ENCODE measurements at regions of chr3 and their contacts with region 1.

Region 1: DNA sequence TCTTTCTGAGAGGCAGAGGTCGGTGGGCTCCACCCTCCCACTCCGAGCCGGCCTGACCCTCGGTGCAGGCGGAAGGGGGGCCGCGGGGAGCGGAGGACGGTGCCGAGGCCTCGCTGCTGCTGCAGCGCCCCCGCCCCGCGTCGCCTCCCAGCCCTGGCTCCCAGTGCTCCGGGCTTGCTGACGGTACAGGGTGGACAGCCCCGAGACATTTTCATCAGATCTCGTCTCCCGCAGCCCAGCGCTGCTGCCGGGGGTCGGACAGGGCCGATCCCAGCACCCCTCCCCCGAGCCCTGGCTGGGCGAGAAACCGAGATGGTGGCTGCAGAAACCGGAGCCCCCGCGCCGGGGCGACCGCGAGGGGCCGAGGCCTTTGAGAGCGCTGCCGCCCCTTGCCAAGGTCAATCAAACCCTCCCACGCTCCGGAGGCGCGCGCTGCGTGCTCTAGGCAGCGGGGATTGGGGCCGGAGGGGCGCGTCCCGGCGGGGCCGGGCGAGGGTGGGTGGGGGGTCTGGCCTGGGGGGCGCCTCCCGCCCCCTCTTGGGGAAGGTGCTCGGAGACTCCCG is 42.5 kb downstream of the EPHB3 start:
- DNase-seq: no peak
- H3K4me3 ChIP-seq: peak overlapping the region; percentile 24 to 67 (median 46)
- H3K27ac ChIP-seq: no peak overlapping the region
- H3K4me1 ChIP-seq: peaks cover 6 to 23% (median 15%) of the 10 kb centered on the region in 4 experiments
- H3K27me3 ChIP-seq: peaks cover 41 to 83% (median 78%) of the 10 kb centered on the region in 4 experiments
- CTCF ChIP-seq: peak in 2 of 3 experiments; percentile 2 to 9; a peak in 2 of 4 replicates
- EP300 ChIP-seq: no peak
- POLR2A ChIP-seq: no peak
- RAD21 ChIP-seq: no peak; a peak in 1 of 4 replicates

Region 2: DNA sequence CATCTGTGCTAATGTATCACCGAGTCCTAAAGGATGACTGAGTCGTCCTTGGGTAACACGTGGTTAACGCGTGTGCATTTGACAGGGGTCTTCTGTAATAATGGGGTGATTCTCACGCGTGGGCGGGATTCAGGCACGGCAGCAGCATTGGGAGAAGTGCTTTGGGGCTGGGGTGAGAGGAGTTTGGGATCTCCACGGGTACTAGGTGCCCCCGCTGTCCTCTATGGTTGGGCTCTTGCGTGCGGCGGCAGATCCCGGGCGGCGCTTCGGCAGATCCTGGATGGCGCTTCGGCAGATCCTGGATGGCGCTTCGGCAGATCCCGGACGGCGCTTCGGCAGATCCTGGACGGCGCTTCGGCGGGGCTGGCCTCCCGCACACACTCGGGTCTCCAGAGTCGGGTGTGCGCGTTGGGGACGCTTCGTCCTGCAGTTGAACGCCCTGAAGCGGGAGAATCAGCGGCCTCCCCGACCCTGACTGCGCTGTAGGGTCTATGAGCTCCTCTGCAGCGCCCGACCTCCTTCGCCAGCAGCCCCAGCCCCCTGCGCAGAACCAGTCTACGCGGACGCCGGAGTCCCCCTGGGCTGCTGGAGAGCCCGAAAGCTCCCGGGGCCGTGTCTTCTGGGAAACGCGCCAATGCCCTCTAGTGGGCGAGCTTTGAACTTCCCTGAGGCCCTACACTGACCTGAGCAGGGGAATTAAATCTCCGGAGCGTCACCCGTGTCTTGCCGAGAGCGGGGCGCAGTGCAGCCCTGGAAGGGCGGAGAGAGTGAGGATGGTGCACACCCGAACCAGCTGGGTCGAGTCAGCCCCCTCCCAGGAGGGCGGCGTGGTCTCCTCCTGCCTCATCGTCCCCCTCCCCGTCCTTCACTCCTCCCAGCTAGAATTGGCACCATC is 90.6 kb before region 1 on chr3:
- CTCF ChIA-PET with region 1: no interaction called
- POLR2A ChIA-PET with region 1: no interaction called
- DNase-seq: peak; percentile 75 to 95
- H3K4me3 ChIP-seq: peak overlapping the region; percentile 13 to 61 (median 50)
- H3K27ac ChIP-seq: no peak overlapping the region
- H3K4me1 ChIP-seq: peaks cover 0 to 5% (median 1%) of the 10 kb centered on the region in 4 experiments; a peak in 2 of 7 replicates
- H3K27me3 ChIP-seq: peaks cover 10 to 27% (median 17%) of the 10 kb centered on the region in 4 experiments
- CTCF ChIP-seq: peak; percentile 75 to 86 (median 79)
- EP300 ChIP-seq: no peak
- POLR2A ChIP-seq: no peak
- RAD21 ChIP-seq: peak; percentile 81 to 86

Region 3: GRCh38 chr3:184583578-184584425 is 20.3 kb before region 1 on chr3:
- CTCF ChIA-PET with region 1: interaction called, 14 read pairs
- POLR2A ChIA-PET with region 1: interaction called, 6 read pairs
- DNase-seq: peak in 1 of 2 experiments; percentile 68
- H3K4me3 ChIP-seq: peak overlapping the region; percentile 51 to 71 (median 58)
- H3K27ac ChIP-seq: no peak overlapping the region
- H3K4me1 ChIP-seq: peaks cover 0 to 28% (median 20%) of the 10 kb centered on the region in 4 experiments; a peak in 6 of 7 replicates
- H3K27me3 ChIP-seq: peaks cover 8 to 63% (median 50%) of the 10 kb centered on the region in 4 experiments
- CTCF ChIP-seq: peak in 2 of 3 experiments; percentile 18 to 51; a peak in 2 of 4 replicates
- EP300 ChIP-seq: no peak
- POLR2A ChIP-seq: no peak
- RAD21 ChIP-seq: peak in 1 of 2 experiments; percentile 37; a peak in 1 of 4 replicates

Region 4: DNA sequence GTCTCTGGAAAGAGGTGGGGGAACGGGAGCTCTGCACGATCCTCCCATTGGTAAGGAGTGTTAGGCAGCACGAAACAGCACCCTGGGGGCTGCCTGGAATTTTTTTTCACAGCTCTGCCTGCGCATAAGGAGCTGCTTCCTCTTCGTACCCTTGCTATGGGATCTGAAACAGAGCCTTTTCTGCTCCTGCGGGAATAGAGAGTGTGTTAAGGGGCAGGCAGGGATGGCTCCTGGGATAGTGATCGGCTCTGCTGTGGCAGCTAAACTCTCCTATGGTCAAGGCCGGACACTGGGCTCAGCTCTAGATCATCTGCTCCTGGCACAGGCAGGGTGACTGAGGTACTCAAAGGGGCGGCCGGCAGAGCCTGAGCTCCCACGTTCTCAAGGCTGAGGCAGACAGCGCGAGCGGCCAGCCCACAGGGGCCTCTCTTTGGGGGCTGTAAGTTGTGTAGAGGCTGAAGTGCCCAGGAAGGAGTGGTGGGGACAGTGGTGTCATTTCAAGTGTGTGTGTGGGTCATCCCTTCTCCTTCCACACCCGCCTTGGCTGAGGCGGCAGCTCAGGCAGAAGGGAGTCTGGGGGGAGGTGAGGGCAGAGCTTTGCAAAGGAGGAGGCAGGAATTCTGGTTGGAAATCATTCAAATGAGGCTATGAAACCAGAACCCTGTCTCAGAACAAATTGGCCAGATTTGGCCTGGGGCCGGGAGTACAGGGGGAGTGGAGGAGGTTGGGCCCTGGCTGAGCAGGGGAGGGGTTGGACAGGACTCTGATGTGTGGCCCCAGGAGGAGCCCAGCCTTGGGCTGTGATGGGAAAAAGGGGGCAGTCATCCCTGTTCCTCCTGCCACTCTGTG is 11.5 kb before region 1 on chr3:
- CTCF ChIA-PET with region 1: interaction called, 6 read pairs
- POLR2A ChIA-PET with region 1: interaction called, 19 read pairs
- DNase-seq: no peak
- H3K4me3 ChIP-seq: no peak overlapping the region
- H3K27ac ChIP-seq: no peak overlapping the region
- H3K4me1 ChIP-seq: peaks cover 4 to 40% (median 13%) of the 10 kb centered on the region in 4 experiments
- H3K27me3 ChIP-seq: peaks cover 0 to 21% (median 20%) of the 10 kb centered on the region in 4 experiments; a peak in 6 of 7 replicates
- CTCF ChIP-seq: no peak
- EP300 ChIP-seq: no peak
- POLR2A ChIP-seq: no peak
- RAD21 ChIP-seq: no peak

Region 5: DNA sequence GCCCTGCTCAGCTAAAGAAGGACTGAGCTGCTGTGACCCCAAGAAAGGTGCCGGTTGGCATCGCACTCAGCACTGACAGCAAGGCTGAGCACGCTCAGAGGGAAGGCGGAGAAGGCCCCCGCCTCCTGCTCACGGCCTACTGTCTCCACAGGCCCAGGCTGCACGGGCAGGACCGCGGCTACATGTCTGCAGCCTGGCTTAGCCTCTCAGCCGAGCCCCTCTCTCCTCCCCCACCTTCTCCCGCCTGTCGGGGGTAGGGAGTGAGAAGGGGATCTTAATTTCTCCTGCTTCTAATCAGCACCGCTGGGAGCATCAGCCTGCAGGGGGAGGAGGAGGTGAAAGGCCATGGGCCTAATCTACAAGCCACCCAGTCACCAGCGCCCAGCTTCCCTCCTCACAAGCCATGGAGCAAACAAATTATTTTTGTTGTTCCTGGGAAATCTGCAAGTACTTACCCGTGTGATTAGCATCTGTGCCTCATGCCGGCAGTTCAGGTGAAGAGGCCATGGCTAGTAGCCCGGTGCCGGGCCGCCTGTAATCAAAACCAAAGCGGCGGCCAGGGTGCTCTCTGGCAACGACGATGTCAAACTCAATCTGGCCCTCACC is 25.5 kb after region 1 on chr3:
- CTCF ChIA-PET with region 1: interaction called, 12 read pairs
- POLR2A ChIA-PET with region 1: interaction called, 4 read pairs
- DNase-seq: peak; percentile 17 to 63
- H3K4me3 ChIP-seq: no peak overlapping the region
- H3K27ac ChIP-seq: no peak overlapping the region
- H3K4me1 ChIP-seq: peaks cover 0 to 24% (median 11%) of the 10 kb centered on the region in 4 experiments; a peak in 6 of 7 replicates
- H3K27me3 ChIP-seq: peaks cover 0 to 2% (median 0%) of the 10 kb centered on the region in 4 experiments; a peak in 1 of 7 replicates
- CTCF ChIP-seq: no peak
- EP300 ChIP-seq: no peak
- POLR2A ChIP-seq: no peak
- RAD21 ChIP-seq: peak; percentile 9 to 11; a peak in 1 of 4 replicates